ENCODE measurements at regions of chr2 and their contacts with region 1.

Region 1: GRCh38 chr2:134245340-134245984 is 8.4 kb upstream of the MGAT5 start:
- DNase-seq: peak; percentile 92
- H3K4me3 Mint-ChIP-seq: peak overlapping the region; percentile 56
- H3K27ac Mint-ChIP-seq: no peak overlapping the region
- H3K4me1 Mint-ChIP-seq: peaks cover 55% of the 10 kb centered on the region
- H3K27me3 Mint-ChIP-seq: peaks cover 2% of the 10 kb centered on the region

Region 2: DNA sequence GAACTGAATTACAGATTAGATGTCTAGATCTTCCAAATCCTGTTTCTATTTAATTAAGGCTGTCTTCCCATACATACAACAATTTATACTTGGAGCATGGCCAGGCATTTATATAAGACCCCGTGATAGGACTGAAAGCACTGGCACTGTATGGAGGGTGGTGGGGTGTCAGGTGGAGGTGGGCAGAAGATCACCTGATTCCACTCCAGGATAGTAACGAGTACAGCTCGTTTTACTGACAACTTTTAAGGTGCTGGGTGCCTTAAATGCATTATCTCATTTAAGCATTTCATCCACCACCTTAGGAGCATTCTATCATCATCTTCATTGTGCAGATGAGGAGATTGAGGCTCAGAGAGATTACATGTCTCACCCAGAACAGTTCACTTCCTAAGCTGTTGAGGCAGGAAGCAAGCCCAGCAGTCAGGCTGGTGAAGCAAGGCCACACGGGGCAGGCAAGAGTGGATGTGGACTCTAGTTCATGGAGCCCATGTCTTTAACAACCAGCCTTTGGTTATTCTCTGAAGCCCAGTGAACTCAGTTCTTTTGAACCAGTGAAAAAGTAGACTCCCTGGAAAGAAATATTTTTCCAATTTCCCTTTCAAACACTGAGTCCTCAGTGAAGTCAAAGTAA is 286.5 kb before region 1 on chr2:
- intact Hi-C with region 1: no loop called
- DNase-seq: no peak
- H3K4me3 Mint-ChIP-seq: no peak overlapping the region
- H3K27ac Mint-ChIP-seq: no peak overlapping the region
- H3K4me1 Mint-ChIP-seq: no peaks in the 10 kb centered on the region
- H3K27me3 Mint-ChIP-seq: peaks cover 12% of the 10 kb centered on the region

Region 3: DNA sequence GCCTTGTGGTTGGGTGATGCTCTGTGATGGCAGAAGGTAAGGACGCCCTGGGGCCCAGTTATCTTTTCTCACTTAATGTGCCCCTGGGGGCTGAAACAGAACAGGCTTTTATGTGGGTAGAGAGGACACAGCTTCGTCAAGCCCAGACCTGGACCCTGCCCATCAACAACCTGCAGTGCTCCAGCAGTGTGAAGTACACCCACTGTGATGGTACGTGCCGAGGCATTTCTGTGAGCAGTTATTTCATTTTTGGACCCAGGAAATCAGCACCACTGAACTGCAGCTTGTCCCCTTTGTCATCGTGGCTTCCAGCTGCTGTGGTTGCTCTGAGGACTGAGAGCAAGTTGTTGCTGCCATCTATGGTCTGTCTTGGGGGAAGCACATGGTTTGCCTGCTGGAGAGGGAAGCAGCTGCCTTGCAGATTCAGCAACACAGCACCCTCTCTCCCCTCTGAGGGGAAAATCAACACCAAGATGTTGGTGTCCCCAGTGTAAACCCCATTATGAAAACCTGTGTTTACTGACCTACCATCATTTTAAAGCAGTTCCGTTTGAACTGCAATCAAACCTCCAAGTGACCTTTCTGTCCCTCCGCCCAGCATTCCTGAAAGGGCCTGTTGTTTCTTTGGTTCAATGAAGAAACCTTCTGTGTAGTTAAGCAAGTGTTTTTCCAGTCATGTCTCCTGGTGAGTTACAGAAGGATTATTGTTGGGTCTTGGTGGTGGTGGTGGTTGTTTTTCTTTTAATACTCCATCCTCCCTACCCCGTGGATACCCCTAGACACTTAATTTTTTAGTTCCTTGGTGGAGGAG is 166.6 kb after region 1 on chr2:
- intact Hi-C with region 1: loop called (anchors 2 kb)
- DNase-seq: peak; percentile 92
- H3K4me3 Mint-ChIP-seq: no peak overlapping the region
- H3K27ac Mint-ChIP-seq: no peak overlapping the region
- H3K4me1 Mint-ChIP-seq: peaks cover 19% of the 10 kb centered on the region
- H3K27me3 Mint-ChIP-seq: no peaks in the 10 kb centered on the region

Measured in activated CD4-positive, alpha-beta T cell treated with anti-CD3 and anti-CD28 coated beads, Interleukin-2, amount 10 ng/mL, durations not matched to agents 24 days and 14 days (primary cell).